ENCODE measurements at regions of chr3 and their contacts with region 1.

Region 1: DNA sequence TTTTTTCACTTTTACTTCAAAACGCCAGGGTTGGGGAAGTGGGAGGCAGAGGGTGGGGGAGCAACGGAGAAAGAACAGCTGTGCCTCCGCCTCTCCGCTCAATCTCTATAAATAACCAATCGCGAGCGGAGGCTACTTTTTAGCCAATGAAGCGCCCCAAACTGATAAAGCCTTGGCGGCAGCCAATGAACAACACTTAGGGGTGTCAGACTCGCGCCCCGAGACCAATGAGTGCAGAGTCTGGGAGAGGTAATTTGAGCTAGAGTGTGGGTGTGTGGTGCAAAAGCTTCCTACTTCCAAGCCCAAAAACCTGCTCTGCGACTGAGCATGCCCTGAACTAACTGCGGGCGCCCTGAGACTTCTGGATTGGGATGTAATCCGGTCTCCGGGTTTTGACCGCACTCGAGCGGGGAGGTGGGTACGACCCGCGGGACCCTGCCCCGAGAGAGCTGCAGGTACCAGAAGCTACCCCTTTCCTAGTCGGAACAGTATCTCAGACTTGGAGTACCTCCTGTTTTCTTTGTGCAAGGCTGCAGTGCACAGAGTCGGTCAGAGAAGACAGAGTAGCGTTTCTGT is 800 bp upstream of the RAP2B start:
- DNase-seq: peak; percentile 99
- H3K4me3 ChIP-seq: peak overlapping the region; percentile 88 to 100 (median 94)
- H3K27ac ChIP-seq: peak overlapping the region; percentile 84
- H3K4me1 ChIP-seq: peaks cover 18% of the 10 kb centered on the region
- H3K27me3 ChIP-seq: no peaks in the 10 kb centered on the region
- CTCF ChIP-seq: no peak
- POLR2A ChIP-seq: no peak

Region 2: GRCh38 chr3:153052096-153052460 is 109.1 kb before region 1 on chr3:
- CTCF ChIA-PET with region 1: interaction called, 3 read pairs
- POLR2A ChIA-PET with region 1: interaction called, 5 read pairs
- dilution Hi-C with region 1: no loop called
- intact Hi-C with region 1: loop called (anchors 1 kb)
- DNase-seq: peak; percentile 91
- H3K4me3 ChIP-seq: no peak overlapping the region
- H3K27ac ChIP-seq: peak overlapping the region; percentile 95
- H3K4me1 ChIP-seq: peaks cover 22% of the 10 kb centered on the region
- H3K27me3 ChIP-seq: no peaks in the 10 kb centered on the region
- CTCF ChIP-seq: no peak
- POLR2A ChIP-seq: no peak

Region 3: DNA sequence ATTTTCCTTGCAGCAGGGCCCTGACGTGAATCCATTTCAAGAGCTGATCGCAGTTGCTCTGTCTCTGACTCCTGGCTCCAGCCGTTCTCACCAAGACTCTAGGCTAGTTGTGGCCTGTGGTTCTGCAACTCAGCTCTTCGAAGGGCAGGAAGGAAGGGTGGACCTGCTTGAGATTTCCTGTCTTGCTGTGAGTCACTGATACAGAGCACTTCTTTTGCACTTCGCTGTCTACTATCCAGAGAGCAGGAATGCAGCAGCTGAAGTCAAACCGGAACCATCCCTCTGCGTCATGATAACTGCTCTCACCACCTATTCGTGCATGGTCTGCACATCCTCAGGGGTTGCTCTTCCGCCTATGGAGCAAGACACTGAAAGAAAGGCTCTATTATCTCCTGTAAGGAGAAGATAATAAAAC is 60.5 kb after region 1 on chr3:
- CTCF ChIA-PET with region 1: interaction called, 7 read pairs
- POLR2A ChIA-PET with region 1: interaction called, 11 read pairs
- dilution Hi-C with region 1: no loop called
- intact Hi-C with region 1: loop called (anchors 1 kb)
- DNase-seq: peak; percentile 95
- H3K4me3 ChIP-seq: peak overlapping the region in 1 of 3 experiments; percentile 39
- H3K27ac ChIP-seq: peak overlapping the region; percentile 70
- H3K4me1 ChIP-seq: peaks cover 29% of the 10 kb centered on the region
- H3K27me3 ChIP-seq: no peaks in the 10 kb centered on the region
- CTCF ChIP-seq: no peak
- POLR2A ChIP-seq: peak; percentile 91

Region 4: GRCh38 chr3:153291056-153291685 is 129.9 kb after region 1 on chr3:
- CTCF ChIA-PET with region 1: interaction called, 79 read pairs
- POLR2A ChIA-PET with region 1: no interaction called
- dilution Hi-C with region 1: no loop called
- intact Hi-C with region 1: loop called (anchors 1 kb)
- DNase-seq: peak; percentile 27
- H3K4me3 ChIP-seq: no peak overlapping the region
- H3K27ac ChIP-seq: no peak overlapping the region
- H3K4me1 ChIP-seq: no peaks in the 10 kb centered on the region
- H3K27me3 ChIP-seq: no peaks in the 10 kb centered on the region
- CTCF ChIP-seq: peak; percentile 17 to 25
- POLR2A ChIP-seq: no peak

Region 5: DNA sequence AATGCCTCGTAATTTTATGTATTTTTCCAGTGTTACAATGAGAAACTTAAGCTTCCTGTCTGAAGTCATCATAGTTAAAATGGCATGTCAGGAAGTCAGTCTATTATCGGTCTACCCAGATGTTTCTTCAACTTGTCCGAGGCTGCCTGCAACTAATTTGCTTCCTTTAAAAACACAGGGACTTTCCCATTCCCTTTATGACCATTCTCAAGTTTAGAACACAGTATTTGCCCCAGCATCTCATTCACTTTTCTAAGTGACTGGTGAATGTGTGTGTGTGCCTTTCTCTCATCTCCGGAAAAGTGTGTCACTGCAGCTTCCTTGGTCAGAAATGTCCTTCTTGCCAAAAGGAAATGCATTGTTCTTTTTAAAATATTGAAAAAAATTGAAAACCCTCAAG is 467.4 kb after region 1 on chr3:
- CTCF ChIA-PET with region 1: interaction called, 3 read pairs
- POLR2A ChIA-PET with region 1: no interaction called
- dilution Hi-C with region 1: no loop called
- intact Hi-C with region 1: loop called (anchors 1 kb)
- DNase-seq: peak; percentile 98
- H3K4me3 ChIP-seq: no peak overlapping the region
- H3K27ac ChIP-seq: peak overlapping the region; percentile 98
- H3K4me1 ChIP-seq: peaks cover 61% of the 10 kb centered on the region
- H3K27me3 ChIP-seq: no peaks in the 10 kb centered on the region
- CTCF ChIP-seq: no peak
- POLR2A ChIP-seq: no peak

Region 6: DNA sequence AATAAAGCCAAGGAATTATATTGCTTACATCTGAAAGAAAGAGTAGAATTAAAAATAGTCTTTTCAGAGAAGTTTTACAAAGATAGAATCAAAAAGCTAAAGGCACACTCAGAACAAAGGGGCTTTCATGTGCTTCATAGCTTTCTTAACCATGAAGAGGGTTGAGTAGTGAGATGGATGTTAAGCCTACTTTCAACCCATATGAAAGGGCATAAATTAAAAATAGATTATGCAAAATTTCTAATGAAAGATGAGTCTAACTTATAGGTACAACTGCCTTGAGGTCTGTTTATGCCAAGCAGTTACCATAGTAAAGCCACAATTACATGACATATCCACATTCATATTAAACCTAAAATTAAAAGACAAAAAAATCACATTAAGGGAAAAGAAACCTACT is 736.6 kb after region 1 on chr3:
- CTCF ChIA-PET with region 1: no interaction called
- POLR2A ChIA-PET with region 1: no interaction called
- dilution Hi-C with region 1: no loop called
- intact Hi-C with region 1: loop called (anchors 10 kb)
- DNase-seq: no peak
- H3K4me3 ChIP-seq: no peak overlapping the region
- H3K27ac ChIP-seq: no peak overlapping the region
- H3K4me1 ChIP-seq: no peaks in the 10 kb centered on the region
- H3K27me3 ChIP-seq: no peaks in the 10 kb centered on the region
- CTCF ChIP-seq: no peak
- POLR2A ChIP-seq: no peak

Region 7: DNA sequence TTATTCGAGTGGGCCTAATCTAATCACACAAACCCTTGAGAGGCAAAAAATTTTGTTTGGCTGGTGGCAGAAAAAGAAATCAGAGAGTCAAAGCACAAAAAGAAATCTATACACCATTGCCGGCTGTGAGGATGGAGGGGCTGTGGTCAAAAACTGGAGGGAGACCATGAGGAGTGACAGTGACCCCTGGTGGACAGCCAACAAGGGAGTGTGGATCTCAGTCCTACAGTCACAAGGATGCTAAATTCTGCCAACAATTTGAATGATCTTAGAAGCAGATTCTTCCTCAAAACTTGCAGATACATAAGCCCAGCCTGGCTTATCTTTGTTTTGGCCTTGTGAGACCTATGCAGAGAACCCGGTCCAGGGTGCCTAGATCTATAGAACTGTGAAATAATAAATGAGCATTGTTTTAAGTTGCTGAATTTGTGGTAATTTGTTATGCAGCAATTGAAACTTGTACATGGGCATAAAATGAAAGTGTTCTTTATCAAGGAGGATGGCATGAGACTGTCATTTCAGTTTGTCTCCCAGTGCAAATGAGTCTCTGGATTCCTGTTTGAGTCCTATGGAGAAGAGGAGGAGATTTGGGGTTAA is 857.0 kb after region 1 on chr3:
- CTCF ChIA-PET with region 1: no interaction called
- POLR2A ChIA-PET with region 1: no interaction called
- dilution Hi-C with region 1: no loop called
- intact Hi-C with region 1: loop called (anchors 5 kb)
- DNase-seq: peak; percentile 23
- H3K4me3 ChIP-seq: no peak overlapping the region
- H3K27ac ChIP-seq: no peak overlapping the region
- H3K4me1 ChIP-seq: no peaks in the 10 kb centered on the region
- H3K27me3 ChIP-seq: peaks cover 1 to 2% of the 10 kb centered on the region in 2 experiments
- CTCF ChIP-seq: peak; percentile 67
- POLR2A ChIP-seq: no peak